ENCODE measurements at regions of chr12 and their contacts with region 1.

Region 1: DNA sequence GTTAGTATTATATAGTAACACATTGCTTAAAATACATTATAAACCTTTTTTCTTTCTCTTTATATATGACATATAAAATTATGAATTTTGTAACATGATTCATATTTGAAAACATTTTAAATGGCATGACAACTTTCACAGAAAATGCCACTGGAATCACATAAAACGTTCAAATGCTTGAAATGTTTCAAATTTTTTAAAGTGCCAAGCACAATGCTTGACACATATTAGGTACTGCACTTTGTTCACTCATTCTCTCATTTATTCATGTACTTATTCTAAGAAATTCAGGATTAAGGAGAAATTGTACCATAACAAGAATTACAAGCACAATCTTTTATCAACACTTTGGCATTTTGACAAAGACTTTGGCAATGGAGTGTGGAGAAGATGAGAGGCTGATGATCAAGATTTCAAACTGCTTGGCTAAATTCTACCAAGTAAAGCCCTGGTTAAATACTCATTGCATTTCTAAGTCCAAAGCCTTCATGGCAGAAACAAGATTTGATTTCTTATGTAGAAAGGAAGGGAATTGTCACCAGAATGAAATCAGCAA is 232.2 kb downstream of the C12orf50 start:
- DNase-seq: no peak
- H3K4me3 ChIP-seq: no peak overlapping the region
- H3K27ac ChIP-seq: no peak overlapping the region
- H3K4me1 ChIP-seq: no peaks in the 10 kb centered on the region
- H3K27me3 ChIP-seq: no peaks in the 10 kb centered on the region
- CTCF ChIP-seq: no peak

Region 2: GRCh38 chr12:87509237-87509820 is 287.7 kb before region 1 on chr12:
- CTCF ChIA-PET with region 1: interaction called, 11 read pairs
- dilution Hi-C with region 1: no loop called
- in situ Hi-C with region 1: no loop called
- intact Hi-C with region 1: no loop called
- DNase-seq: peak; percentile 68
- H3K4me3 ChIP-seq: no peak overlapping the region
- H3K27ac ChIP-seq: peak overlapping the region; percentile 57
- H3K4me1 ChIP-seq: peaks cover 10% of the 10 kb centered on the region
- H3K27me3 ChIP-seq: no peaks in the 10 kb centered on the region
- CTCF ChIP-seq: no peak